HEK293 (cell line): ENCODE measurements at regions of chr2 and their contacts with region 1.

Region 1: DNA sequence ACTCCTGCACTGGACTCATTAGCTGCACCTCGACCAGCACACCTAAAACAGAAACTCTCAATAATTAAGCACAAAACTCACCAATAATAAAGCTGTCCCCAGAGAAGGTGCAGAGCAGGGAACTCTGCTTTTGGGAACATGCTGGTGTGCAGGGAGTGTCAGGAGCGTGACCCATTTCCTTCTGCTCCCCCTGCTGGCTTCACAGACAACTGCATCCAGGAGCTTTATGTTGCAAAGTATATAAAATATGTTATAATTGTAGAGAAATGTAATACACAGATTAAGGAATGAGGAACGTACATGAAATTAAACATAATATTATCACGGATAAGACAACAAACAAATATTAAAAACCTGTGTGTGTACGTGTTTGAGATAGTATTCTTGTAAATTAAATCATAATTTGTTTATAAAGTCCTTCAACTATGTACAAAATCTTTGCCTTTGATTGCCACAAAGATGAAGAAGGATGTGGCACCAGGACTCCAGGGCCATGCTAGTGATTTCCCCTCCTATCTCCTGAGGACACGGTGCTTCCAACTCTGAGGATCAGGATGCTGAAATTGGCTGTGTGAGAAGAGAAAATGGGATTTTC is 68.6 kb upstream of the MAL start:
- H3K4me3 ChIP-seq: no peak overlapping the region
- H3K27ac ChIP-seq: no peak overlapping the region
- H3K4me1 ChIP-seq: no peaks in the 10 kb centered on the region
- CTCF ChIP-seq: 0 out of 2 replicates have a peak, but pooled peaks have one; percentile 9

Region 2: DNA sequence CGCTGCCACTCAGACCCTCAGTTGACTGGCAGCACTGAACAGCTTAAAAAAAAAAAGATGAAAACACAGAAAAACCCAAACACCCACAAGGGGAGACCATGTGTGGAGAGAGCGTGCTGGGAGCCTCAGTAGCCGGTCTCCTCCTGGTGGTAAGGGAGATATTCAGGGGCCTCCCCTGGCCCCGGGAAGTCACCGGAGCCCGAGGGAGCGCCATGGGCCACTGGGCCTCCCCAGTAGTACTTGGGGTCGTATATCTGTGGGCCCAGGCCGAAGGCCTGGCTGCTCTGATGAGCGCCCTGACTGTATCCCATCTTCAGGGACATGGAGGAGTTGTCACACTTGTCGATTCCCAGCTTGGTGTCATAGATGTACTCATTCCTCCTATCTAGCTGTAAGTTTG is 231.4 kb before region 1 on chr2:
- CTCF ChIA-PET with region 1: no interaction called
- POLR2A ChIA-PET with region 1: no interaction called
- H3K4me3 ChIP-seq: no peak overlapping the region
- H3K27ac ChIP-seq: no peak overlapping the region
- H3K4me1 ChIP-seq: no peaks in the 10 kb centered on the region
- CTCF ChIP-seq: no peak

Region 3: DNA sequence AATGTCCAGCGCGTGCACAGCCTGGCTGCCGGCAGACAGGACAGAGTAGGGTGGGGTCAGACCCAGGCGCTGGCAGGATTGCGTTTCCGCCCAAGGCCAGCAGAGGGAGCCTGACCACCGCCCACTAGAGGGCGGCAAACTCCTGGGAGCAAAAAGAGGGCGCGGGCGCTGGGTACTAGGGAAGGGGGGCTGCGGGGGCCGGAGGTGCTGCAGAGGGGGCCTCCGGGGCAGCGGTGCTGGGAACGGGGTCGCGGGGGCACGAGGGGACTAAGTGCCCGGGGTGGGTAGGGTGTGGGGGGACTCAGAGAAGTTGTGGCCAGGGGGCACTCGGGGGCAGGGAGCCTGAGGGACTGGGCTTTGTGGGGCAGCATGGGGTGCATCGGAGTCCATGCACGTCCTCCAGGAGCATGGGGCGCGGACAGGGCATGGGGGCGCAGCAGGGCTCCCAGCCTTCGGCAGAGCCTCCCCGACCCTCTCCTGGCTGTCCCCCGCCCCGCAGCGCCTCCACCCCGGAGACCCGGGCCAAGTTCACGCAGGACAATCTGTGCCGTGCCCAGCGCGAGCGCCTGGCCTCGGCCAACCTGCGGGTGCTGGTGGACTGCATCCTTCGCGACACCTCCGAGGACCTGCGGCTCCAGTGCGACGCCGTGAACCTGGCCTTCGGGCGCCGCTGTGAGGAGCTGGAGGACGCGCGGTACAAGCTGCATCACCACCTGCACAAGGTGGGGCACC is 82.5 kb before region 1 on chr2:
- CTCF ChIA-PET with region 1: interaction called, 86 read pairs
- POLR2A ChIA-PET with region 1: no interaction called
- H3K4me3 ChIP-seq: no peak overlapping the region
- H3K27ac ChIP-seq: no peak overlapping the region
- H3K4me1 ChIP-seq: no peaks in the 10 kb centered on the region
- CTCF ChIP-seq: peak; percentile 90

Region 4: GRCh38 chr2:94939349-94939748 is 17.5 kb before region 1 on chr2:
- CTCF ChIA-PET with region 1: interaction called, 29 read pairs
- POLR2A ChIA-PET with region 1: no interaction called
- H3K4me3 ChIP-seq: no peak overlapping the region
- H3K27ac ChIP-seq: no peak overlapping the region
- H3K4me1 ChIP-seq: no peaks in the 10 kb centered on the region
- CTCF ChIP-seq: no peak

Region 5: DNA sequence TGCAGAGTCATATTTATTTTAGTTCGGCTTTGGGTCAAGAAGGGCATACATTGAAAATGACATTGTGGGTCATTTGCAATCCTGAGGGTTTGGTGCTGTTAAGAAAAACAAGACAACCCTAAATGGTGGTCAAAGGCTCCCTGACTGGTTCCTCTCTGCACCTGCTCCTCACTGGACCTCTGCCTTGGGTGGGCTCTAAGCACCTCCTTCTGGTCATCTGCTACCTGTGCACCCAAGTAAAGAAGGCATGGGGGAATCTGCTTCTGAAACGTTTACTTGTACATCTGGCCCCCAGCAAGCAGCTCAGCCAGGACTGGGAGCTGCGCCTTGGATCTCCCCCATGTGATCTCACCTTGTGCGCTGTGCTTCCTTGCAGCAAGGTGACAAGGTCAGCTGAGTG is 13.5 kb after region 1 on chr2:
- CTCF ChIA-PET with region 1: interaction called, 15 read pairs
- POLR2A ChIA-PET with region 1: no interaction called
- H3K4me3 ChIP-seq: no peak overlapping the region
- H3K27ac ChIP-seq: no peak overlapping the region
- H3K4me1 ChIP-seq: no peaks in the 10 kb centered on the region
- CTCF ChIP-seq: no peak